H1 (cell line): ENCODE measurements at regions of chr7 and their contacts with region 1.

Region 1: GRCh38 chr7:148142660-148143248 is 447.8 kb upstream of the C7orf33 start:
- DNase-seq: no peak
- H3K4me3 ChIP-seq: no peak overlapping the region
- H3K27ac ChIP-seq: no peak overlapping the region
- H3K4me1 ChIP-seq: no peaks in the 10 kb centered on the region
- H3K27me3 ChIP-seq: no peaks in the 10 kb centered on the region
- CTCF ChIP-seq: peak in 2 of 3 experiments; percentile 62 to 75; a peak in 3 of 4 replicates
- EP300 ChIP-seq: no peak
- POLR2A ChIP-seq: no peak
- RAD21 ChIP-seq: peak; percentile 81 to 85

Region 2: GRCh38 chr7:147999962-148000361 is 142.8 kb before region 1 on chr7:
- CTCF ChIA-PET with region 1: no interaction called
- POLR2A ChIA-PET with region 1: no interaction called
- DNase-seq: peak in 1 of 2 experiments; percentile 57
- H3K4me3 ChIP-seq: no peak overlapping the region
- H3K27ac ChIP-seq: no peak overlapping the region
- H3K4me1 ChIP-seq: peaks cover 0 to 4% (median 3%) of the 10 kb centered on the region in 4 experiments; a peak in 3 of 7 replicates
- H3K27me3 ChIP-seq: no peaks in the 10 kb centered on the region; a peak in 1 of 7 replicates
- CTCF ChIP-seq: no peak
- EP300 ChIP-seq: 0 out of 3 replicates have a peak, but pooled peaks of 1 of the 2 experiments have one; percentile 25
- POLR2A ChIP-seq: no peak
- RAD21 ChIP-seq: no peak

Region 3: DNA sequence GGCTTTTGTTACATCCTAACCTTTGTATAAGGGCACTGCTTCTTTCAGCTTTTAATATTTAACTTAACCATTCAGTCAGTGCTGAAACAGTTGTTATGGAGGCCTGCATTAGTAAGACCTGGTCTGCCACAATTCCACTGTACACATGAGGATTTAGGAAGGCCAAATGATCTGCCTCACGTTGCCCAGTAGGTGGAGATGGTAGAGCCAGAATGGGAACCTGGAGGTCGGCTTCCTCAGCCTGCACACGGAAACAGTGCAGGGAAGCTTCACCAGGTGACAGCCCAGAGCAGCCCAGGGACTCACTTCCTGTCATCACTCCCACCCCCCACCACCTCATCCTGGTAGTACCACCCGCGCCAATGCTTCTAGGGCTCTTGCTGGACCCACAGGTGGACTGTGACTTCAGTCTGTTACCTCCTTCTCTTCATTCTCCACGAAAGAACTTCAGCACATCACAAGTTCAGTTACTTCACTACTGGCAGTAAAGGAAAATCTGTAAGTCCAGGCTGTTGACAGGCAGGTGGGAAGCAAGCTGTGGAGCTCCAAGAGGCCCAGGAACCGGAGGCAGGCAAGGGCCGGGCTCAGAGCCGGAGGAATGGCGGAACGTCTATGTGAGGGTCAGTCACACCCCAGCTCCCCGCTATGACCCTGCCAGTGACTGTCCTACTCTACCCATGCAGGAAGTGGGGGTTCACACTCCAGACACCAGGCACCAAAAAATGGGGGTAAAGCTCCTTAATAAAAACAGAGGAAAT is 32.5 kb before region 1 on chr7:
- CTCF ChIA-PET with region 1: interaction called, 16 read pairs
- POLR2A ChIA-PET with region 1: no interaction called
- DNase-seq: no peak
- H3K4me3 ChIP-seq: no peak overlapping the region
- H3K27ac ChIP-seq: no peak overlapping the region
- H3K4me1 ChIP-seq: peaks cover 3 to 10% (median 6%) of the 10 kb centered on the region in 4 experiments; a peak in 6 of 7 replicates
- H3K27me3 ChIP-seq: no peaks in the 10 kb centered on the region
- CTCF ChIP-seq: peak; percentile 19 to 54 (median 39); a peak in 3 of 4 replicates
- EP300 ChIP-seq: no peak
- POLR2A ChIP-seq: no peak
- RAD21 ChIP-seq: peak; percentile 49 to 53

Region 4: GRCh38 chr7:148129029-148129428 is 13.7 kb before region 1 on chr7:
- CTCF ChIA-PET with region 1: interaction called, 10 read pairs
- POLR2A ChIA-PET with region 1: no interaction called
- DNase-seq: no peak
- H3K4me3 ChIP-seq: no peak overlapping the region
- H3K27ac ChIP-seq: no peak overlapping the region
- H3K4me1 ChIP-seq: no peaks in the 10 kb centered on the region; a peak in 1 of 7 replicates
- H3K27me3 ChIP-seq: peaks cover 0 to 1% (median 0%) of the 10 kb centered on the region in 4 experiments; a peak in 1 of 7 replicates
- CTCF ChIP-seq: no peak
- EP300 ChIP-seq: no peak
- POLR2A ChIP-seq: no peak
- RAD21 ChIP-seq: no peak

Region 5: DNA sequence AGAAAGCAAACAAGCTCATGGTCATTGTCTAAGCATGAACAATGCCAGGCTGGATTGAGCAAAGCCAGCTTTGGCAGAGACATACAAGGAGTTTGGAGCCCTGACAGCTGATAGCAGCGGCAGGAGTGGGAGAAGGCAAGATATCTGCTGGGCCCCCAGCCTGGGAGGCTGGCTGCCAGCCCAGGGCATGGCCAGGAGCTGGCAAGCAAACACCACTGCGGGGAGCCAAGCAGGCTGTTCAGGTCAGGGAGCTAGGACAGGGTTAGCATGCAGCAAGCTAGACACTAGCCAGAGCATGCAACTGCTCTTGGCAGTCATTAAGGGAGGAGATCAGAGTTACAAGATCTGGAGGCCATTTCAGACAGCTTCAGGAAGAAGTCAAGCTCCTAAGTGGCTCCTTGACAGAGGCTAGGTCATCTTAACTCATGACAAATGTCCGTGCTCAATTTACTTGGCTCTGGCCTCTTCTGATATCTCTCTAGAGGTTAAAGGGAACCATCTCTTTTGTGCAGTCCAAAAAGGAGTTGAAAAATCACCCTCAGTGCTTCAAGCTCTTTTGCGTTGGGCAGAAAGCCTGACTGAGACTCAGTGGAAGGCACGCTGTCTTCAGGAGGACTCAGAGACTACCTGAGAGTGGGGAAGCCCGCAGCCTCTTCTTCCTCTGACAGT is 11.0 kb after region 1 on chr7:
- CTCF ChIA-PET with region 1: interaction called, 32 read pairs
- POLR2A ChIA-PET with region 1: no interaction called
- DNase-seq: no peak
- H3K4me3 ChIP-seq: no peak overlapping the region
- H3K27ac ChIP-seq: no peak overlapping the region
- H3K4me1 ChIP-seq: no peaks in the 10 kb centered on the region
- H3K27me3 ChIP-seq: no peaks in the 10 kb centered on the region
- CTCF ChIP-seq: no peak
- EP300 ChIP-seq: no peak
- POLR2A ChIP-seq: no peak
- RAD21 ChIP-seq: no peak

Region 6: DNA sequence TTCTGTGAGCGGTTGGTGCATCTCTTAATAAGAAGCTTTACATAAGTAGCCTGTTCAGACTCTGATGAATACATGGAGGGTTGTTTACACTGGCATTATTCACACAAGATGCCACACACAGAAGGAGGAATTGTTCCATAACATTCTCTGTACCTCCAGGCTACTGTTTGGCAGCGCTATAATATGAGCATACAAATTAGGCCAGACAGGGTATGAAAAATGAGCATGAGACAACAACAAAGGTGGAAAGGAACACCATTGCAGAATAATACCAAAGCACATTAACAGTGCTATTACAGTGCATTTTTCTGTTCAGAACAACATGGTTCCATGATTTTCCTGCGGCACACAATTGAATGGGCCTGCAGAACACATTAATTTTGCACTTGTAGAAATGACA is 30.6 kb after region 1 on chr7:
- CTCF ChIA-PET with region 1: no interaction called
- POLR2A ChIA-PET with region 1: no interaction called
- DNase-seq: no peak
- H3K4me3 ChIP-seq: no peak overlapping the region
- H3K27ac ChIP-seq: no peak overlapping the region
- H3K4me1 ChIP-seq: no peaks in the 10 kb centered on the region
- H3K27me3 ChIP-seq: peaks cover 0 to 1% (median 0%) of the 10 kb centered on the region in 4 experiments; a peak in 1 of 7 replicates
- CTCF ChIP-seq: no peak
- EP300 ChIP-seq: no peak
- POLR2A ChIP-seq: no peak
- RAD21 ChIP-seq: no peak